ENCODE measurements at regions of chr1 and their contacts with region 1.

Region 1: GRCh38 chr1:16009030-16009709 is 5.1 kb downstream of the SRARP start:
- DNase-seq: peak; percentile 74 to 87
- H3K4me3 ChIP-seq: no peak overlapping the region
- H3K27ac ChIP-seq: peak overlapping the region in 1 of 2 donors; percentile 7
- H3K4me1 ChIP-seq: peaks cover 0 to 24% (median 19%) of the 10 kb centered on the region in 4 donors
- H3K27me3 ChIP-seq: no peaks in the 10 kb centered on the region
- CTCF ChIP-seq: peak; percentile 97 to 99

Region 2: DNA sequence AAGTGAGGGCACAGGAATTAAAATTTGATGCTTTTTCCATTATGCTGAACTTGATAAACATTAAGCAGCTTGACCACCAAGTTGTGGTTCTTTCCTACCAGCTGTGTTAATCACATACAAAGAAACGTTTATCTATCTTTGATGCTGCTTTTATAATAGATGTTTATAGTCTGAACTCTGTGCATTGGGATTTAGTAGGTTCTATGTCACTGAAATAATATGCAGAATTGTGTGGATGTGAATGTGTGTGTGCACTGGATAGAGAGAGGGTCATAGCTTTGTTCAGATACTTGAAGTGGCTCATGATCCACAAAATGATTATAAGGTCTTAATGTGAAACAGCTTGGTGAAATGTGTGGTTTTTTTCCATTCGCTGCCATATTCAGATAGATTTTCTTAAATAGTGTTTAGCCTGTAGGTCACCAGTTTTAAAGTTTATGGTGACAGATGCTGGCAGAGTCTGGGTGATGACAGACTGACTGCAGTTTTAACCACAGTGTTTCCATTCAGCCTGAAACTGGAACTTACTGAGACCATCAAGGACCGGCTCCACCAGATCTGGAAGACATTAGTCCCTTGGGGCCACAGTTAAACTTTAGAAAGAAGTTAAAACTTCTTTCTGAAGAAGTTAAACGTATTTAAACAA is 381.7 kb before region 1 on chr1:
- intact Hi-C with region 1: no loop called
- DNase-seq: no peak
- H3K4me3 ChIP-seq: no peak overlapping the region
- H3K27ac ChIP-seq: no peak overlapping the region
- H3K4me1 ChIP-seq: peaks cover 0 to 7% (median under 1%) of the 10 kb centered on the region in 4 donors
- H3K27me3 ChIP-seq: no peaks in the 10 kb centered on the region
- CTCF ChIP-seq: no peak

Region 3: GRCh38 chr1:16032388-16033103 is 23.4 kb after region 1 on chr1:
- intact Hi-C with region 1: loop called (anchors 2 kb)
- DNase-seq: peak; percentile 86 to 92
- H3K4me3 ChIP-seq: no peak overlapping the region
- H3K27ac ChIP-seq: no peak overlapping the region
- H3K4me1 ChIP-seq: peaks cover 0 to 12% (median 9%) of the 10 kb centered on the region in 4 donors
- H3K27me3 ChIP-seq: no peaks in the 10 kb centered on the region
- CTCF ChIP-seq: peak; percentile 100

Measured in tibial artery (tissue), 4 donors.